ENCODE measurements at regions of chr9 and their contacts with region 1.

Region 1: GRCh38 chr9:71079451-71079850 is 42.0 kb downstream of the TRPM3 start:
- DNase-seq: no peak
- H3K4me3 Mint-ChIP-seq: no peak overlapping the region
- H3K27ac Mint-ChIP-seq: no peak overlapping the region
- H3K4me1 Mint-ChIP-seq: no peaks in the 10 kb centered on the region
- H3K27me3 Mint-ChIP-seq: peaks cover 54% of the 10 kb centered on the region
- CTCF ChIP-seq: no peak

Region 2: DNA sequence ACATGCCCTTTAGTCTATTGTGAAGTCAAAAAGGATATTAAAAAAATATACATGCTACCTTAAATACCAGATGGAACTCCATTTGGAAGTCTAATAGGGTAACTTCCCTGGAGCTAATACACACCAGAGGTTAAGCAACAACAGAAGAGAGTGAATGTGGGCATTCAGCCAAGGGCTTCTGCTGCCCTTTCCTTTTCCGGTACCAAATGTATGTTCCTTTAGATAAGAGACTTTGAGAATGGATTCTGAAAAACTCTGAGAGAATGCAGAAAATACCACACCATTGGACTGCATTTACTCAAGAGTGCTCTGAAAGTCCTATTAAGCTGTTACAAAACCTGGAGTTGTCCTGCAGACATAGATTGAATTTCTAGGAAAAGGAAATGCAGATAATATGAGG is 65.7 kb after region 1 on chr9:
- CTCF ChIA-PET with region 1: no interaction called
- POLR2A ChIA-PET with region 1: no interaction called
- intact Hi-C with region 1: loop called (anchors 10 kb)
- DNase-seq: peak; percentile 27
- H3K4me3 Mint-ChIP-seq: no peak overlapping the region
- H3K27ac Mint-ChIP-seq: no peak overlapping the region
- H3K4me1 Mint-ChIP-seq: peaks cover 4% of the 10 kb centered on the region
- H3K27me3 Mint-ChIP-seq: no peaks in the 10 kb centered on the region
- CTCF ChIP-seq: no peak

Region 3: DNA sequence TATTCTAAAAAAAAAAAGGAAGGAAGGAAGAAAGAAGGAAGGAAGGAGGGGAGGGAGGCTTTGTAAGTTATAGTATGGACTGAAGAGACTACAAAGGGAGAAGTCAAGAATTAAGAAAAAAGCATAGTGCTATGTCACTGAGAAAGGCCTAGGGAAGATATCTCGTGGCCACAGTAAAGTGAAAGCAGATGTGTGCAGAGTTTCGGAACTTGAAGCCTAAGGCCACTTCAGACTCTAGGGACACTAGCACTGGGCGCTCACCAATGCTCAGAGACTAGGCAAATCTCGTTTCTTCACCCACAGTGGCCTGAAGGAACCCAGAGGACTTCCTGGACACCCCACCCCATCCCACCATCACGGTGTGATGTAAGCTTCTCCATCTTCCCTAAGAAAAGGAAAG is 223.3 kb after region 1 on chr9:
- CTCF ChIA-PET with region 1: no interaction called
- POLR2A ChIA-PET with region 1: no interaction called
- intact Hi-C with region 1: no loop called
- DNase-seq: no peak
- H3K4me3 Mint-ChIP-seq: no peak overlapping the region
- H3K27ac Mint-ChIP-seq: no peak overlapping the region
- H3K4me1 Mint-ChIP-seq: no peaks in the 10 kb centered on the region
- H3K27me3 Mint-ChIP-seq: peaks cover 21% of the 10 kb centered on the region
- CTCF ChIP-seq: no peak